Stomach (tissue), 19 donors: ENCODE measurements at regions of chr1 and their contacts with region 1.

Region 1: GRCh38 chr1:212994926-212995325 is 20.7 kb downstream of the ANGEL2 start:
- DNase-seq: no peak
- H3K4me3 ChIP-seq: no peak overlapping the region
- H3K27ac ChIP-seq: no peak overlapping the region
- H3K4me1 ChIP-seq: peaks cover 0 to 8% (median 0%) of the 10 kb centered on the region in 4 donors
- H3K27me3 ChIP-seq: no peaks in the 10 kb centered on the region
- CTCF ChIP-seq: no peak
- EP300 ChIP-seq: no peak
- POLR2A ChIP-seq: no peak

Region 2: GRCh38 chr1:212814537-212815334 is 180.2 kb before region 1 on chr1:
- intact Hi-C with region 1: loop called (anchors 5 kb)
- DNase-seq: peak in 1 of 2 donors; percentile 76
- H3K4me3 ChIP-seq: no peak overlapping the region
- H3K27ac ChIP-seq: no peak overlapping the region
- H3K4me1 ChIP-seq: peaks cover 0 to 22% (median 0%) of the 10 kb centered on the region in 4 donors
- H3K27me3 ChIP-seq: no peaks in the 10 kb centered on the region
- CTCF ChIP-seq: peak in 4 of 7 experiments; percentile 27 to 47 (median 45)
- EP300 ChIP-seq: no peak
- POLR2A ChIP-seq: no peak

Region 3: DNA sequence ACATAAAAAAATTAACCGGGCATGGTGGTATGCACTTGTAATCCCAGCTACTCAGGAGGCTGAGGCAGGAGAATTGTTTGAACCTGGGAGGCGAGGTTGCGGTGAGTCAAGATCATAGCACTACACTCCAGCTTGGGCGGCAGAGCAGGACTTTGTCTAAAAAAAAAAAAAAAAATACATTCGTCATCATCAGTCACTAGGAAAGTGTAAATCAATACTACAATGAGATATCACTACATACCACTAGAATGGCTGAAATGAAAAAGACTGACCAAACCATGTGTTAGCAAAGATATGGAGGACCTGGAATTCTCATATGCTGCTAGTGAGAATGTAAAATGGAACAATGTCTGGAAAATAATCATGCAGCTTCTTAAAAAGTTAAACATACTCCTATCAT is 156.8 kb before region 1 on chr1:
- intact Hi-C with region 1: no loop called
- DNase-seq: no peak
- H3K4me3 ChIP-seq: no peak overlapping the region
- H3K27ac ChIP-seq: no peak overlapping the region
- H3K4me1 ChIP-seq: peaks cover 0 to 12% (median under 1%) of the 10 kb centered on the region in 4 donors
- H3K27me3 ChIP-seq: no peaks in the 10 kb centered on the region
- CTCF ChIP-seq: no peak
- EP300 ChIP-seq: no peak
- POLR2A ChIP-seq: no peak

Region 4: DNA sequence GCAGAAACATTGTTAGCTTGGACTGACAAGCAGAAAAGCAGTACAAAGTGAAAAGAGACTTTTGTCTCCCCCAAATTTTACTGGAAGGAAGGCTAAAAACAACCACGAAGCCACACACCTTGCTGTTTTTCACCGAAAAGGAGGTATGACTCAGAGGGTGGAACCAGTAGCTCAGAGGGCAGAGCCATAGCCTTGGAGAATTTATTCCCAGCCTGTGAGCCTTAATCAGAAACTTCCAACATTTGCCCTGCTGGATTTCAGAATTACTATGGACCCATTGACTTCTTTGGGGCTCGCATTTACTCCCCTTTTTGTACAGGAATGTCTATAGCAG is 88.2 kb after region 1 on chr1:
- intact Hi-C with region 1: no loop called
- DNase-seq: no peak
- H3K4me3 ChIP-seq: no peak overlapping the region
- H3K27ac ChIP-seq: no peak overlapping the region
- H3K4me1 ChIP-seq: no peaks in the 10 kb centered on the region
- H3K27me3 ChIP-seq: no peaks in the 10 kb centered on the region
- CTCF ChIP-seq: no peak
- EP300 ChIP-seq: no peak
- POLR2A ChIP-seq: no peak

Region 5: DNA sequence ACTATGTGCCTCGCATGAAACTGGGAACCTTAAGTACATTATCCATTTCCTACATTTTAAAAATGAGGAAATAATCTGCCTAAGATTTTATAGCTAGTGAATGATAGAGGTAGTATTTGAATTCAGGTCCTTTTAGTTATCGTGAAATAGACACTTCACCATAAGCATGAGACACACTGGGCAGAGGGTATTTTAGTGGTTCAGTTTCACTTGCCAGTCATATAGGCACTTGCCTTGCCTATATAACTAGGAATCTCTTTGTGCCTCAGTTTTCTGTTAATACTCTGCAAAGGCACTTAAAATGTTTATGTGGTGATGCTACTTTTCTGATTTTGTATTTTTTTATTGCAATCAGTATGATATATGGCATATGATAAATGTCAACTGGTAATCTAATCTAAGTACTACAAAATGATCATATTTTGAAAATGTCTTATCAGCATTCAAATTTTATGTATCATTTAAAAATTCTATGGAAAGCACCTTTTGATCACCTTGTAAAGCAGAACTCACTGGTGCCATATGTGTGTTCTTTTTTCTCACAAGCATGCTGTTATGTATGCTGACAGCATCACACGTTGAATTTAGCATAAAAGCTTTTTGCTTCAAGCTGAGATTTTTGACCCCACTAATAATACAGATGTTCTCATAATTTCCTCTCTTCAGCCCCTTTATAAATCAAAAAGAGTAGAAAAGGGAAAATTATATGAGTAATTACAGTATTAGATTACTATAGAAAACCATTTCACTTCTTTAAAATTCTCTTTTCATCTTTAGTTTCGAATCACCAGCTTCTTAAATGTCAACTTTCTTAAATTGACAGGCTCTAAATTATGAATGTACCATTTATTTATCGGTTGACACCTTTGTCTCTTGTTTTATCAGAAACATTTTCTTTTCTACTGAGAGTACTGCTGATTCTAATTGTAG is 108.7 kb after region 1 on chr1:
- intact Hi-C with region 1: no loop called
- DNase-seq: no peak
- H3K4me3 ChIP-seq: no peak overlapping the region
- H3K27ac ChIP-seq: no peak overlapping the region
- H3K4me1 ChIP-seq: peaks cover 0 to 6% (median 0%) of the 10 kb centered on the region in 4 donors
- H3K27me3 ChIP-seq: no peaks in the 10 kb centered on the region
- CTCF ChIP-seq: no peak
- EP300 ChIP-seq: no peak
- POLR2A ChIP-seq: no peak